Panc1 (cell line): ENCODE measurements at regions of chr4 and their contacts with region 1.

Region 1: DNA sequence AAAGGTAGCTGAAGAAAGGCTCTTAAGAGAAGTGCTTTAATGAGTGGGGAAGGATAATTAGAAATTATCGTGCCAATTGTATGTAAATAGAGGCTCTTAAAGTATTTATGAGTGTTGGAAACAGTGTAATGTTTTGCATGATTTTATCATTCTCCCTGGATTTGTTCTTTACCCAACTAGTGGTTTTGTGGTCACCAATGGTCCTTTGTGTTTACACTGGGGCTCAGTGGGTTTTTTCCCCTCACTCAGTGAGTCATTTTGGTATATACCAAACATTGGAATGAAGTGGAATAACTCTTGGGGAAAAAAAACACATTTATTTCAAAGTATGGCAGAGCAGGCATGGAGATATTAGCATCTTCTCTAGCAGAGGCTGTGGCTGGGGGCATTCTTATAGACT is 20.8 kb upstream of the LGI2 start:
- DNase-seq: no peak
- ATAC-seq: no peak
- H3K4me3 ChIP-seq: no peak overlapping the region
- H3K27ac ChIP-seq: no peak overlapping the region
- H3K4me1 ChIP-seq: no peaks in the 10 kb centered on the region
- H3K27me3 ChIP-seq: peaks cover 2% of the 10 kb centered on the region; the same call in 1 of the 2 replicates
- CTCF ChIP-seq: no peak

Region 2: DNA sequence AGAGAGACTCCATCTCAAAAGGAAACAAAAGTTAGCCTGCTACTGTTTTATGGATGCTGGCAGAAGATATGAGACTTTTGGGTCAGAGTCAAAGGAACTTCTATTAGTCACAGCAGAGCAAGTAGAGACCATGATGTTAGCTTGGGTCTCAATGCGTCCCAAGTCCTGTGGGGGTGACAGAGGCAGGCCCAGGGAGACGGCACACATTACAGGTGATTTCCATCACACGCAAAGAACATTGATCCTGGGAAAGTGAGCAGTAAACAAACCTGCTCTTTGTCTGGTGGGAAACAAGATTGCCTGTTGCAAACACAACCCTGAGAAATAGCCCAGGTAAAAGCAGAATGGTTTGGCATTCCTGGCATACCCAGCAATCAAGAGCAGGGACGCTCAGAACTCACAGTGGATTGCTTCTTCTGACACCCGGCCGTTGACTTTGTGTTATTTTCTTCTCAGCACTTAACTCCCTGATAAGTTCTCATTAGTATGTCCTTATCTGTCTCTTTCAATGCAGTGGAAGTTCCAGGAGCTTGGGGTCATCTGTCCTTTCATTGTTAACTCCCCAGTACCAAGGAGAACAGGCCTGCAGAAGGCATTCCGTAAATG is 30.4 kb after region 1 on chr4:
- CTCF ChIA-PET with region 1: no interaction called
- POLR2A ChIA-PET with region 1: interaction called, 12 read pairs
- in situ Hi-C with region 1: no loop called
- intact Hi-C with region 1: no loop called
- DNase-seq: no peak
- ATAC-seq: no peak
- H3K4me3 ChIP-seq: no peak overlapping the region
- H3K27ac ChIP-seq: no peak overlapping the region
- H3K4me1 ChIP-seq: no peaks in the 10 kb centered on the region
- H3K27me3 ChIP-seq: no peaks in the 10 kb centered on the region
- CTCF ChIP-seq: no peak